Head of caudate nucleus (tissue), 42 donors: ENCODE measurements at regions of chr3 and their contacts with region 1.

Region 1: GRCh38 chr3:71875461-71875947 is 90.6 kb upstream of the PROK2 start:
- DNase-seq: peak; percentile 77 to 93 (median 86)

Region 2: DNA sequence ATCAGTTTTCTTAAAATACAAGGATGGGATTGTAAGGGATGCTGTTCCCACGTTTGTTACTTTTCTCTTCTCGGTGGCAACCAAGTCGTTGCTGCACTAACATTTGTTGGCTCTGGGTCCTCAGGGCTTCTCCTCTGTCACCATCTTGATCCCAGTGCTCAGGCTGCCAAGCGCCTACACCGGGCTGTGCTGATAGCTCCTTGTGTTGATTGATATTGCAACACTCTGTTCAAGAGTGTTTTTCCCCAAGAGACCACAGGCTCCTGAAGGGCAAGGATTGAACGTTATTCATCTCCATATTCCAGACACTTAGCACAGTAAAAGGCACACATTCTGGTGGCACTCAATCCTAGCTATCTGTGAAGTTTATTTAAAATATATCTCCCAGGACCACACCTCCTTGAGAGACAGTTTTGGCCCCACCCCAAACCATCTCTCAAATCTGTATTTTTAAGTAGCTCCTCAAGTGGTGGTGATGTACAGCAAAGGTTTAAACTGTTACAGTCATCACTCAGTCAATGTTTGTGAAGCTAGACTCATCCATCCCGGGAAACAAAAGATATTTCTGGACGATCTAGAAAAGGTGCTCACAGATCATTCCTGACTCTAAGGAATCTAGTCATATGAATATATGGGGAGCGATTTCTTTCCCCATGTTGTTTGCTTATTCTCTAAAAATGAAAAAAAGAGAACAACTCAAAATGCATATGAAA is 253.5 kb before region 1 on chr3:
- intact Hi-C with region 1: no loop called
- DNase-seq: no peak

Region 3: DNA sequence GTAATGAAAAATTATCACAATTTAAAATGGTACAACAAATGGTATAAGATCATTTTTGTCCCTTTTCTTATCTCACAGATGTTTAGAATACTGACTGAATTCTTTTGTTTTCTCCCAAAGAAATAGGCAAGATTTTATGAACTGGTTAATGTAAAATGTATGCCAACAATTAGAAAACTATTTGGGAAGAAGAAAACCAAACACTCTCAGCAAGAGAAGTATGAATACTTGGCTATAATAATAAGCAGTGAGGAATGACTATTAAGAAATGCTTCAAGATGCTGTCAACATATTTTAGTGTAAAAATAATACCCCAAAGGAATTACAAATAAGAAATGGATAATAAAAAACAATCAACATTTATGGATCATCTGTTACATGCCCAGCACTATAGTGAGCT is 954.2 kb after region 1 on chr3:
- intact Hi-C with region 1: loop called (anchors 5 kb)
- DNase-seq: no peak